Calu3 (cell line): ENCODE measurements at regions of chr22 and their contacts with region 1.

Region 1: GRCh38 chr22:41940832-41941765 is 5.9 kb downstream of the CENPM start:
- DNase-seq: peak; percentile 88
- H3K4me3 Mint-ChIP-seq: peak overlapping the region; percentile 4
- H3K27ac Mint-ChIP-seq: peak overlapping the region; percentile 96
- H3K4me1 Mint-ChIP-seq: peaks cover 57% of the 10 kb centered on the region
- H3K27me3 Mint-ChIP-seq: no peaks in the 10 kb centered on the region
- CTCF ChIP-seq: peak; percentile 78

Region 2: GRCh38 chr22:41746567-41747400 is 194.3 kb before region 1 on chr22:
- CTCF ChIA-PET with region 1: interaction called, 20 read pairs
- intact Hi-C with region 1: loop called (anchors 1 kb)
- DNase-seq: peak; percentile 84
- H3K4me3 Mint-ChIP-seq: no peak overlapping the region
- H3K27ac Mint-ChIP-seq: no peak overlapping the region
- H3K4me1 Mint-ChIP-seq: no peaks in the 10 kb centered on the region
- H3K27me3 Mint-ChIP-seq: peaks cover 65% of the 10 kb centered on the region
- CTCF ChIP-seq: peak; percentile 59

Region 3: GRCh38 chr22:41822317-41823060 is 118.6 kb before region 1 on chr22:
- CTCF ChIA-PET with region 1: interaction called, 18 read pairs
- intact Hi-C with region 1: loop called (anchors 1 kb)
- DNase-seq: peak; percentile 40
- H3K4me3 Mint-ChIP-seq: no peak overlapping the region
- H3K27ac Mint-ChIP-seq: no peak overlapping the region
- H3K4me1 Mint-ChIP-seq: peaks cover 11% of the 10 kb centered on the region
- H3K27me3 Mint-ChIP-seq: no peaks in the 10 kb centered on the region
- CTCF ChIP-seq: peak; percentile 35

Region 4: GRCh38 chr22:41925655-41926460 is 15.2 kb before region 1 on chr22:
- CTCF ChIA-PET with region 1: interaction called, 16 read pairs
- intact Hi-C with region 1: no loop called
- DNase-seq: peak; percentile 89
- H3K4me3 Mint-ChIP-seq: peak overlapping the region; percentile 75
- H3K27ac Mint-ChIP-seq: no peak overlapping the region
- H3K4me1 Mint-ChIP-seq: peaks cover 7% of the 10 kb centered on the region
- H3K27me3 Mint-ChIP-seq: peaks cover 53% of the 10 kb centered on the region
- CTCF ChIP-seq: peak; percentile 92